CD4-positive, alpha-beta T cell (primary cell): ENCODE measurements at regions of chr15 and their contacts with region 1.

Region 1: GRCh38 chr15:60585743-60586708 is 107.1 kb upstream of the ICE2 start:
- DNase-seq: peak in 11 of 14 experiments; percentile 20 to 89 (median 53)
- ATAC-seq: peak; percentile 33
- H3K4me3 ChIP-seq: peak overlapping the region; percentile 13
- H3K4me3 Mint-ChIP-seq: peak overlapping the region; percentile 81
- H3K27ac ChIP-seq: peak overlapping the region; percentile 21 to 47
- H3K27ac Mint-ChIP-seq: peak overlapping the region; percentile 85
- H3K4me1 ChIP-seq: peaks cover 35% of the 10 kb centered on the region
- H3K4me1 Mint-ChIP-seq: peaks cover 89% of the 10 kb centered on the region
- H3K27me3 ChIP-seq: no peaks in the 10 kb centered on the region
- H3K27me3 Mint-ChIP-seq: no peaks in the 10 kb centered on the region
- CTCF ChIP-seq: peak; percentile 95

Region 2: DNA sequence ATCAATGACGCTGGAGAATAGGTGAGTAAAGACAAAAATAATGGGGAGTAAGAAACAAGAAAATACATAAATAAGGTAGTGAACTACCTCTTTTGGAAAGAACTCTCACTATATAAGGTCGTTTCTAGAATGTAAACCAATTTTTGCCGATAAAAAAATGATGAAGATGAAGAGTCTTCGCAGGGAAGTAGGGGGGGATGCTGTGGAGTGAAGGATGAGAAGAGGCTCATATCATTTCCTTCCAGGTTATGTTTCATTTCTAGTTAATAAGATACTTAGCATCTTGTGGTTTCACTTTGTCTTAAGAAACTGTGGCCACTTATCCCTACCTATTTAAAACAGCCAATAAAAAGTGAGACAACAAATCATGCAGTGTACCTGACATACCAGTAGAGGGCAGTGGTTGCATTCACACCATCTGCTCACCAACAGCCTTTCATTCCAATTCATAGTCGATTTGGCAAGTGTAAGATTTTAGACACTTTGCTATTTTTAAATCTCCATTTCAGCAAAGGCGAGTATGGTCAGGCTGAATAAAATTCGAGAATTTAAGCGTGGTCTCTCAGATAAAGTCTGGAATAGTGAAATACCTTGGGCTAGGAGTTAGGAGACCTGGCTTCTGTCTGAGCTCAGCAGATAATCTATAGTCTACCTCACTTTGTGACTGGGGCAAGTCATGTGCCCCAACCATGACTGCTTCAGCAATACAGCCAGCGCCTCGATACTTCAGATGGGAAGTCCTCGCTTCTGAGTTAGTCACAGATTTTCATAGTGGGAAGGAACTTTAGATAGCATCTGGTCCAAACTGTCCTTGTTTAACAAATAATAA is 78.2 kb before region 1 on chr15:
- CTCF ChIA-PET with region 1: interaction called, 7 read pairs
- POLR2A ChIA-PET with region 1: interaction called, 4 read pairs
- intact Hi-C with region 1: loop called in 1 of 2 experiments (anchors 2 kb)
- DNase-seq: peak in 12 of 14 experiments; percentile 14 to 89 (median 43)
- ATAC-seq: peak; percentile 87
- H3K4me3 ChIP-seq: no peak overlapping the region
- H3K4me3 Mint-ChIP-seq: peak overlapping the region; percentile 1
- H3K27ac ChIP-seq: peak overlapping the region in 1 of 2 donors; percentile 14
- H3K27ac Mint-ChIP-seq: peak overlapping the region; percentile 84
- H3K4me1 ChIP-seq: peaks cover 19% of the 10 kb centered on the region
- H3K4me1 Mint-ChIP-seq: peaks cover 58% of the 10 kb centered on the region
- H3K27me3 ChIP-seq: no peaks in the 10 kb centered on the region
- H3K27me3 Mint-ChIP-seq: no peaks in the 10 kb centered on the region
- CTCF ChIP-seq: peak; percentile 87

Region 3: GRCh38 chr15:60541481-60542299 is 44.3 kb before region 1 on chr15:
- CTCF ChIA-PET with region 1: interaction called, 15 read pairs
- POLR2A ChIA-PET with region 1: interaction called, 9 read pairs
- intact Hi-C with region 1: loop called in 1 of 2 experiments (anchors 5 kb)
- DNase-seq: no peak
- ATAC-seq: no peak
- H3K4me3 ChIP-seq: no peak overlapping the region
- H3K4me3 Mint-ChIP-seq: peak overlapping the region; percentile 57
- H3K27ac ChIP-seq: peak overlapping the region in 1 of 2 donors; percentile 50
- H3K27ac Mint-ChIP-seq: peak overlapping the region; percentile 85
- H3K4me1 ChIP-seq: peaks cover 62% of the 10 kb centered on the region
- H3K4me1 Mint-ChIP-seq: peaks cover 100% of the 10 kb centered on the region
- H3K27me3 ChIP-seq: no peaks in the 10 kb centered on the region
- H3K27me3 Mint-ChIP-seq: no peaks in the 10 kb centered on the region
- CTCF ChIP-seq: no peak

Region 4: GRCh38 chr15:60568301-60568742 is 17.7 kb before region 1 on chr15:
- CTCF ChIA-PET with region 1: interaction called, 15 read pairs
- POLR2A ChIA-PET with region 1: interaction called, 240 read pairs
- intact Hi-C with region 1: loop called in 1 of 2 experiments (anchors 2 kb)
- DNase-seq: no peak
- ATAC-seq: no peak
- H3K4me3 ChIP-seq: peak overlapping the region; percentile 3
- H3K4me3 Mint-ChIP-seq: peak overlapping the region; percentile 56
- H3K27ac ChIP-seq: peak overlapping the region in 1 of 2 donors; percentile 58
- H3K27ac Mint-ChIP-seq: peak overlapping the region; percentile 84
- H3K4me1 ChIP-seq: peaks cover 76% of the 10 kb centered on the region
- H3K4me1 Mint-ChIP-seq: peaks cover 95% of the 10 kb centered on the region
- H3K27me3 ChIP-seq: no peaks in the 10 kb centered on the region
- H3K27me3 Mint-ChIP-seq: no peaks in the 10 kb centered on the region
- CTCF ChIP-seq: no peak

Region 5: DNA sequence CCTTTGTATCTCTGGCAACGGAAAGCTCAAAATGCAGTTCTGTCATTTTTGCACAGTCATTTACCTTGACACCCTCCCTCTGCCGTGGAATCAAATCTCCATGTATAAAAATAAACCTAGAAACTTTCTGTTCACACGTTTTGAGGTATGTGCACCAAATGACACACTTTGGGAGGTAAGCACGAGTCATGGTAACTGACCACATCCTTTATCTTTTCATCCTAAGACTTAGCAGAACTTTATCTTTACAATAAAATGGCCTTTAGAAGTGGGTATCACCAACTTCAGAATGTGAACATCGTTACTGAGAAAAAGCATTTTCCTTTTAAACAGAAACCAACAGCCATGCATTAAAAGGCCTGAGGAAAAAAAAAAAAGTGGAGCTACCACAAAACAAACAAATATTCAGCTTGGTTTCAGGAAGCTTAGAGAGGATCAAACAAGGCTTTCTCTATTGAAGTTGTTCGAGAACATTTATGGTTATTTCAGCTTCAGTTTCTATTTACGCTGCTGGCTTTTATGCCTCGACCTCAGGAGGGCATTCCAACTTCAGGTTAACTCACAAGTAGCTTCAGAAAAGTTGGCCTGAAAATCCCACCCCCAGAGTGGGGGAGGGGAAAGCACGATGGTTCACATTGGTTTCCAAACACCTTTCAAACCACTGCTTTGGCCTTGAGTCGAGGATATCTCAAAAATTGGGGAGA is 64.0 kb after region 1 on chr15:
- CTCF ChIA-PET with region 1: interaction called, 7 read pairs
- POLR2A ChIA-PET with region 1: interaction called, 12 read pairs
- intact Hi-C with region 1: loop called in 1 of 2 experiments (anchors 5 kb)
- DNase-seq: peak in 9 of 14 experiments; percentile 4 to 87 (median 11)
- ATAC-seq: peak; percentile 84
- H3K4me3 ChIP-seq: peak overlapping the region; percentile 15
- H3K4me3 Mint-ChIP-seq: peak overlapping the region; percentile 58
- H3K27ac ChIP-seq: peak overlapping the region in 1 of 2 donors; percentile 59
- H3K27ac Mint-ChIP-seq: peak overlapping the region; percentile 79
- H3K4me1 ChIP-seq: peaks cover 30% of the 10 kb centered on the region
- H3K4me1 Mint-ChIP-seq: peaks cover 46% of the 10 kb centered on the region
- H3K27me3 ChIP-seq: no peaks in the 10 kb centered on the region
- H3K27me3 Mint-ChIP-seq: no peaks in the 10 kb centered on the region
- CTCF ChIP-seq: no peak

Region 6: DNA sequence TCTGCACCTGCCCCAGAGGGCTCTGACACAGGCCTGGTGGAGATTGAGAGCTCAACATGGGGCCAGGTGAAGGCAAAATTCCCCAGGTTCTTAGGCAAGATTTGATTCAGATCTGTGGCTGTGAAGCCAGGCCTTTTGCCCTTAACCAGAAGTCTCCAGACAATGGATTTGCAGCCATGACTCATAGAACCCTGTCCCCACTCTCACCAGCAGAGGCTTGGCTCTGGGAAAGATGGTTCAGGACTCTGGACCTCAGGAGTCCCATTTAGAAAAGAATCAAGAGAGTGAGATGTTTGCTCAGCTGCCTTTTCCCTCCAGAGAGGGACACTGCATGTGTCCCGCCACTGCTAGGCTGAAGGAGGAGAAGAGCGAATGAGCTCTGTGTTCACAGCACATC is 254.3 kb after region 1 on chr15:
- CTCF ChIA-PET with region 1: interaction called, 6 read pairs
- POLR2A ChIA-PET with region 1: interaction called, 48 read pairs
- intact Hi-C with region 1: loop called (anchors 2 to 5 kb)
- DNase-seq: peak in 4 of 14 experiments; percentile 25 to 61 (median 46)
- ATAC-seq: no peak
- H3K4me3 ChIP-seq: peak overlapping the region; percentile 59
- H3K4me3 Mint-ChIP-seq: peak overlapping the region; percentile 80
- H3K27ac ChIP-seq: peak overlapping the region; percentile 59 to 86
- H3K27ac Mint-ChIP-seq: peak overlapping the region; percentile 84
- H3K4me1 ChIP-seq: peaks cover 78% of the 10 kb centered on the region
- H3K4me1 Mint-ChIP-seq: peaks cover 97% of the 10 kb centered on the region
- H3K27me3 ChIP-seq: no peaks in the 10 kb centered on the region
- H3K27me3 Mint-ChIP-seq: no peaks in the 10 kb centered on the region
- CTCF ChIP-seq: no peak

Region 7: DNA sequence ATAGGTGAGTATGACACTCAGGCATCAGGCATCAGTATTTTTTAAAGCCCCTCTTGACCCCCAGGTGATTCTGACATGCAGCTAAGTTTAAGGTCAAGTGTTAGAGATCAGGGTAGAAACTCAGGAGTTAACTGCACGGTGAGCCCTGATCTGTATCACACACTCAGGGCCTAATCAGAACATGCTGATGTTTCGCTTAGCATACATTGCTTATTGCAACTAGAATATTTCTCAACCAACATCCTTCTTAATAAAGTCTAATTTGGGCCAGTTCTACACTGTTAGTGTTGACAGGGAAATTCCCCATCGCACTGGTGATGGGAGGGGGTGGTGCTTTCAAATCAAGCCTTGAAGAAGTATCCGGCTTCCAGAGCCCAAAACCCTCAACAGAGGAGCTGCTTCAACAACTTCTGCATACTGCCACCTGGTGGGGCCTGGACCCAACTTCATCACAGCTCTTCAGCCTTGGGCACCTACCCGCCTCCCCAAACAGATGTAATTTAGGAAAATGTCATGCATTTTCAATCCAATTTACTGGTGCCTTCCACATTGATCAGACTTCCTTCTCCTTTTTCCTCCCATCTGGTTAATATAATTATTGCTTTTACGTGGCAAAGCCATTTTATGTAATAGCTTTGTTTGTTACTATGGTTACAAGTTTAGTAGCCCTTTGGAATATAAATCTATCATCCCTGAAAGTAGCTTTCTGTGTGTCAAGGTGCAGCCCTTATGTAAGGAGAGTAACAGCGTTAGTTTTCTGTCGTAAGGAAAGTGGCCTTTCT is 330.8 kb after region 1 on chr15:
- CTCF ChIA-PET with region 1: interaction called, 25 read pairs
- POLR2A ChIA-PET with region 1: interaction called, 21 read pairs
- intact Hi-C with region 1: loop called (anchors 1 kb)
- DNase-seq: peak; percentile 76 to 96 (median 84)
- ATAC-seq: peak; percentile 98
- H3K4me3 ChIP-seq: no peak overlapping the region
- H3K4me3 Mint-ChIP-seq: no peak overlapping the region
- H3K27ac ChIP-seq: no peak overlapping the region
- H3K27ac Mint-ChIP-seq: peak overlapping the region; percentile 50
- H3K4me1 ChIP-seq: peaks cover 12% of the 10 kb centered on the region
- H3K4me1 Mint-ChIP-seq: peaks cover 17% of the 10 kb centered on the region
- H3K27me3 ChIP-seq: no peaks in the 10 kb centered on the region
- H3K27me3 Mint-ChIP-seq: no peaks in the 10 kb centered on the region
- CTCF ChIP-seq: peak; percentile 84